PC-9 (cell line): ENCODE measurements at regions of chr12 and their contacts with region 1.

Region 1: GRCh38 chr12:49069507-49070346 is at the start of gene RHEBL1:
- DNase-seq: peak; percentile 88 to 98
- H3K4me3 ChIP-seq: peak within 1 kb of the TSS; percentile 95
- H3K27ac ChIP-seq: peak within 1 kb of the TSS; percentile 39; the same call in 1 of the 2 replicates
- H3K4me1 ChIP-seq: peaks cover 8% of the 10 kb centered on the region; the same call in 1 of the 2 replicates
- H3K27me3 ChIP-seq: no peaks in the 10 kb centered on the region
- CTCF ChIP-seq: no peak; the same call in 1 of the 2 replicates
- total RNA-seq, gene RHEBL1: 2.9 and 3.4 TPM in 2 replicates

Region 2: DNA sequence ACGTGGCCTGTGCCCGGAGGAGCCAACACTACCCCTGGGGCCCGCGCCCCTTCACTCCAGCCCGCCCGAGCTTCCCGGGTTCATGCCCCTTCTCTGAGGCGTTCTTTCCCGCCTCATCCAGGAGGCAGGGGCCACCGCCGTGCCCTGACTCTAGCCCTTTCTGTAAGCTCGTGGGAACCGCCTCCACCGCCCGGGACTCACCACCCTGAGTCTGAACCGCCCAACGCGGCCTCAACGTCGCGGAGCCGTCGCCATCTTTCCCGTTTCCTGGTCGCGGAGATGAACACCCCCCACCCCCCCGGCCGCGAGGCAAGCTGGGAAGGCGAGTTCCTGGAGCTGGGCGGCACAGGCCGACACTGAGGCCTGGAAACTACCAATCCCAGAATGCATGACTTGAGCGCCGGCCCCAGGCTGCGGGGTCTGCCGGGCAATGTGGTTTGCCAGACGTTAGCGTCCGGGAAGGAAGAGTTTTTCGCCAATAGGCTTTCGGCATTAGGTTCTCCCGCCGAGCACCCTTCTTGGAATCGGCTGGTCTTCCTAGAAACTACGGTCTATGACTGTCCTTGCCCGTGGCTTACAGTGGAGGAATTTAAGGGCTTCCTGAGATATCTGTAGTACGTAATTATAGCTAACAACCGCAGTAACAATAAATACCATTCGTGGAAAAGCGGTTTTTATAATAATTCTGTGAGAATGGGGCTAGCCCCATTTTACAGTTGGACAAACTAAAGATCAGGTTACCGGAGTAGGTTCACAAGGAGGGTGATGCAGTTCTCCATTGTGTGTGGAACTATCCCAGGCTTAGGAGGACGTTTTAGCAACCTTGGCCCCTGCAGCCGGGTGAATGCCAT is 217.6 kb before region 1 on chr12 and contains the start of gene DDX23:
- CTCF ChIA-PET with region 1: no interaction called
- POLR2A ChIA-PET with region 1: no interaction called
- intact Hi-C with region 1: no loop called
- DNase-seq: peak; percentile 92 to 93
- H3K4me3 ChIP-seq: peak within 1 kb of the TSS; percentile 68
- H3K27ac ChIP-seq: peak within 1 kb of the TSS; percentile 45
- H3K4me1 ChIP-seq: peaks cover 19% of the 10 kb centered on the region
- H3K27me3 ChIP-seq: no peaks in the 10 kb centered on the region
- CTCF ChIP-seq: no peak
- total RNA-seq, gene DDX23: 91.4 and 108 TPM in 2 replicates

Region 3: DNA sequence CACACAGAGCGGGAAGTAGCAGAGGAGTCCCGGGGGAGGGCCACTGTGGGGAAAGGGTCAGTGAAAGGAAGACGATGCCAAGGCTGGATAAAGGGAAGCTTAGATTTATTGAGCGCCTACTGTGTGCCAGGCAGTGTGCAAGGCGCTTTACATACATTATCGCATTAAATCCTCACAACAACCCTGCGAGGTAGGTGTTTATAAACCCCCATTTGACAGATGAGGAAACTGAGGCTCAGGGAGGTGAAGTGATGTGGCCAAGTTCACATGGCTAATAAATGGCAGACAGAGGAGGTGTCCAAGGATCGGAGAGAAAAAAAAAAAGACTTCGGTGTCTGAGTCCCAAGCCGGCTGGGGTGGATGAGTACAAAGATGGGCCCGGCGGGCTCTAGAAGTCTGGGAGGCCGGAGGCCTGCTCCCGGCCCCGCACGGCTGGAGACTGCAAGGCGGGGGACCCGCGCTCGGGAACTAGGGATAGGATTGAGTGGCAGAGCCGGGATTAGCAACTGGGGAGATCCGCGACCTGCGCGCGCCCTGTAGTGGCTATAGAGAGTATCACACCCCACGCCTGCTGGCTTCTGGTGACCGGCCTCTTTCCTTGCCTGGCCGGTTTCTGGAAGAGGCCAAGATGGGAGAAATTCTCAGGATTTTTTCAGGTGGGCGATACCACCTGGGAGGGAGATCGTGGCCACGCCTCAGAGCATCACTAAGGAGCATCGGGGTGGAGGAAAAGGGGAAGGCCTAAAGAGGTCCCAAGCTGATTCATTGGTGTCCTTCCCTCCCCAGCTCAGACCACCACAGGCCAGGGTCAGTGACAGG is 74.5 kb before region 1 on chr12:
- CTCF ChIA-PET with region 1: no interaction called
- POLR2A ChIA-PET with region 1: no interaction called
- intact Hi-C with region 1: no loop called
- DNase-seq: peak; percentile 64 to 86
- H3K4me3 ChIP-seq: peak overlapping the region; percentile 27; the same call in 1 of the 2 replicates
- H3K27ac ChIP-seq: no peak overlapping the region
- H3K4me1 ChIP-seq: peaks cover 22% of the 10 kb centered on the region
- H3K27me3 ChIP-seq: no peaks in the 10 kb centered on the region
- CTCF ChIP-seq: peak; percentile 82

Region 4: DNA sequence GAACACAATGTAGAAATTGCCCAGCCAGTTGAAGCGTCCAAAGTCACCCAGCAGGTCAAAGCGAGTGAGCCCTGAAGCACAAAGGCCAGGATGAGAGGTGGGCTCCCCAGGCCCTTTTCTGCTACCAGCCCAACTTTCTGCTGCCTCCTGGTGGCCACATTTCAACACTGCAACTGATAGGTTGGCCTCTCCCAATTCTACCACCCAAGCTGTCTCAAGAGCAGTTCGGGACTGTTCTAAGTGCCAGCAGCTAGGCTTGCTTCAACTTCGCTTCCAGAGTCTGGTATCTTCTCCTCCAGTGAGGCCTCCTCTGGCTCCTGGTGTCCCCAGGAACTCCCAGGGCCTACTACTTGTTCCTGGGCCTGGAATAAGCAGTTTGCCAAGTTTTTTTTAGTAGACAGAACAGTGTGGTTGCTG is 28.3 kb after region 1 on chr12:
- CTCF ChIA-PET with region 1: interaction called, 12 read pairs
- POLR2A ChIA-PET with region 1: no interaction called
- intact Hi-C with region 1: no loop called
- DNase-seq: no peak
- H3K4me3 ChIP-seq: no peak overlapping the region
- H3K27ac ChIP-seq: no peak overlapping the region
- H3K4me1 ChIP-seq: 0 out of 2 replicates have a peak, but pooled peaks cover 4% of the 10 kb centered on the region
- H3K27me3 ChIP-seq: peaks cover 16% of the 10 kb centered on the region
- CTCF ChIP-seq: peak; percentile 80

Region 5: DNA sequence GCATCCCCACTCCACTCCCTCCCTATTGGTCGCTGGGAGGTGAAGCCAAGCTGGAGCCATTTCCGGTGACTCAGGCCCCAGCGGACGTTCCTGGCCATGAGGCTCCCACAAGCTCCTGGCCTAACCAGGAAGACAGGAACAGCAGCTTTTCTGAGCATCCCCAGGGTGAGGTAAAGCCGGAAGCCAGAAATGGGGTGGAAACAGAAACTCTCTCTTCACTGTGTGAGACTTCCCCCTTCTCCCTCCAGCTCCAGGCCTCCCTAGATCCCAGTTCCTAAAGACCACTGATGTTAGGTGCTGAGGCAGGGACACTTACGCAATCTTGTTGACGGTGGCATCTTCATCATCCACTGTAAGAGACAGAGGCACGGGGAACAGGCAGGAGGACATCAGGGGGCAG is 35.9 kb after region 1 on chr12:
- CTCF ChIA-PET with region 1: interaction called, 3 read pairs
- POLR2A ChIA-PET with region 1: interaction called, 12 read pairs
- intact Hi-C with region 1: loop called (anchors 1 kb)
- DNase-seq: peak; percentile 76 to 89
- H3K4me3 ChIP-seq: peak overlapping the region; percentile 7; the same call in 1 of the 2 replicates
- H3K27ac ChIP-seq: peak overlapping the region; percentile 95
- H3K4me1 ChIP-seq: peaks cover 37% of the 10 kb centered on the region
- H3K27me3 ChIP-seq: no peaks in the 10 kb centered on the region
- CTCF ChIP-seq: no peak

Region 6: GRCh38 chr12:49110464-49111155 is 40.9 kb after region 1 on chr12 and contains the start of gene LMBR1L:
- CTCF ChIA-PET with region 1: interaction called, 3 read pairs
- POLR2A ChIA-PET with region 1: interaction called, 12 read pairs
- intact Hi-C with region 1: loop called (anchors 1 kb)
- DNase-seq: peak; percentile 95 to 96
- H3K4me3 ChIP-seq: peak within 1 kb of the TSS; percentile 92
- H3K27ac ChIP-seq: peak within 1 kb of the TSS; percentile 69
- H3K4me1 ChIP-seq: peaks cover 33% of the 10 kb centered on the region
- H3K27me3 ChIP-seq: no peaks in the 10 kb centered on the region
- CTCF ChIP-seq: no peak; the same call in 1 of the 2 replicates
- total RNA-seq, gene LMBR1L: 53.9 and 63.3 TPM in 2 replicates